ENCODE measurements at regions of chr15 and their contacts with region 1.

Region 1: GRCh38 chr15:57340682-57341259 is 35.5 kb upstream of the CGNL1 start:
- DNase-seq: peak; percentile 30
- H3K4me3 ChIP-seq: no peak overlapping the region
- H3K27ac ChIP-seq: no peak overlapping the region
- H3K4me1 ChIP-seq: no peaks in the 10 kb centered on the region
- H3K27me3 ChIP-seq: no peaks in the 10 kb centered on the region
- CTCF ChIP-seq: peak; percentile 72 to 81 (median 77)

Region 2: GRCh38 chr15:57527382-57528091 is 186.8 kb after region 1 on chr15:
- dilution Hi-C with region 1: loop called (anchors 25 kb)
- DNase-seq: peak; percentile 55
- H3K4me3 ChIP-seq: no peak overlapping the region
- H3K27ac ChIP-seq: no peak overlapping the region
- H3K4me1 ChIP-seq: no peaks in the 10 kb centered on the region
- H3K27me3 ChIP-seq: no peaks in the 10 kb centered on the region
- CTCF ChIP-seq: peak; percentile 48 to 57 (median 49)